ENCODE measurements at regions of chr4 and their contacts with region 1.

Region 1: GRCh38 chr4:97153042-97153441 is 990.2 kb downstream of the STPG2 start:
- DNase-seq: peak in 1 of 2 experiments; percentile 4
- H3K4me3 ChIP-seq: no peak overlapping the region
- H3K4me3 Mint-ChIP-seq: no peak overlapping the region
- H3K27ac Mint-ChIP-seq: no peak overlapping the region
- H3K4me1 ChIP-seq: no peaks in the 10 kb centered on the region
- H3K4me1 Mint-ChIP-seq: no peaks in the 10 kb centered on the region
- H3K27me3 ChIP-seq: no peaks in the 10 kb centered on the region
- H3K27me3 Mint-ChIP-seq: no peaks in the 10 kb centered on the region
- CTCF ChIP-seq: peak; percentile 25 to 37

Region 2: GRCh38 chr4:96603641-96604040 is 549.4 kb before region 1 on chr4:
- CTCF ChIA-PET with region 1: no interaction called
- POLR2A ChIA-PET with region 1: no interaction called
- intact Hi-C with region 1: loop called (anchors 5 kb)
- DNase-seq: no peak
- H3K4me3 ChIP-seq: no peak overlapping the region
- H3K4me3 Mint-ChIP-seq: no peak overlapping the region
- H3K27ac Mint-ChIP-seq: no peak overlapping the region
- H3K4me1 ChIP-seq: no peaks in the 10 kb centered on the region
- H3K4me1 Mint-ChIP-seq: peaks cover 1% of the 10 kb centered on the region
- H3K27me3 ChIP-seq: no peaks in the 10 kb centered on the region
- H3K27me3 Mint-ChIP-seq: no peaks in the 10 kb centered on the region
- CTCF ChIP-seq: no peak

Region 3: GRCh38 chr4:97349468-97350186 is 196.6 kb after region 1 on chr4:
- CTCF ChIA-PET with region 1: no interaction called
- POLR2A ChIA-PET with region 1: no interaction called
- intact Hi-C with region 1: no loop called
- DNase-seq: no peak
- H3K4me3 ChIP-seq: no peak overlapping the region
- H3K4me3 Mint-ChIP-seq: no peak overlapping the region
- H3K27ac Mint-ChIP-seq: no peak overlapping the region
- H3K4me1 ChIP-seq: no peaks in the 10 kb centered on the region
- H3K4me1 Mint-ChIP-seq: no peaks in the 10 kb centered on the region
- H3K27me3 ChIP-seq: no peaks in the 10 kb centered on the region
- H3K27me3 Mint-ChIP-seq: no peaks in the 10 kb centered on the region
- CTCF ChIP-seq: no peak